Activated T-helper 1 cell treated with anti-CD3 and anti-CD28 coated beads, Interleukin-12 subunit alpha, Interleukin-12 subunit beta, Interleukin-2, Interleukin-4 antibody, amounts not matched to agents 30 ng/mL and 10 ng/mL and 1 ng/mL, durations not matched to agents 14 hours and 24 hours and 36 hours (primary cell): ENCODE measurements at regions of chr12 and their contacts with region 1.

Region 1: GRCh38 chr12:51424662-51425438 is at the start of gene SLC4A8:
- DNase-seq: peak; percentile 75
- H3K4me3 Mint-ChIP-seq: peak within 1 kb of the TSS; percentile 82
- H3K27ac Mint-ChIP-seq: peak within 1 kb of the TSS; percentile 27
- H3K4me1 Mint-ChIP-seq: peaks cover 16% of the 10 kb centered on the region
- H3K27me3 Mint-ChIP-seq: peaks cover 18% of the 10 kb centered on the region
- total RNA-seq, gene SLC4A8: 2.4 and 2.6 TPM in 2 replicates

Region 2: GRCh38 chr12:51482929-51483697 is 58.3 kb after region 1 on chr12:
- intact Hi-C with region 1: loop called (anchors 5 kb)
- DNase-seq: peak; percentile 11
- H3K4me3 Mint-ChIP-seq: peak overlapping the region; percentile 76
- H3K27ac Mint-ChIP-seq: peak overlapping the region; percentile 96
- H3K4me1 Mint-ChIP-seq: peaks cover 47% of the 10 kb centered on the region
- H3K27me3 Mint-ChIP-seq: peaks cover 4% of the 10 kb centered on the region

Region 3: DNA sequence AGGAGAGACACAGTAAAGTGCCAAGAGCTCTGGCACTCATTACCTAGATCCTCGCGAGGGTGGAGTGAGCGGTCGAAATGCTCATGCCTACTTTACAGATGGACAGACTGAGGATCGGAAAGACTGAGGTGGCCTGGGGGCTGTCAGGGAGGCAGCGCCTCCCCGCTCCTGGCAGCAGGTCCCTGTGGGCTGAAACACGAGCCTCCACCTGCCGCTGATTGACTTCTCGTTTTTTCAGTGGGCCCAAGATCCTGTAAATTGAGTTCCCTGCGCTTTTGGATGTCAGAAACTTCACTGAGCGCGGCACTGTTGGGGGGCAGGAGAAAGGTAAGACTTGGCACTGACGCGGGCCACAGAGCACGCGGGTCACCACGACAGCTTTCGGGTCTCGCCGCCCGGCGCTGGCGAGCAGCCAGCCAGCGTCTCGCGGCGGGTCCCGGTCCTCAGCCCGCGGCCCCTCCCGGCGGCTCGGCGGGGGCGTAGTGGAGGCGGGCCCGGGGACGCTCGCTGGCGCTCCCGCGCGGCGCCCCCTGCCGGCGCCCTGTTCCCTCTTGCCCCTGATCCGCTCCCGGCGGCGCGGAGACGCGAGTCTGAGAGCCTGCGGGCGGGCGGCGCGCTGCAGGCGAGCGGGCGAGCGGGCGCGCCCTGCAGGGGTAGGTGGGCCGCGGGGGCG is 165.6 kb after region 1 on chr12:
- intact Hi-C with region 1: loop called (anchors 5 kb)
- DNase-seq: peak; percentile 72
- H3K4me3 Mint-ChIP-seq: peak overlapping the region; percentile 88
- H3K27ac Mint-ChIP-seq: peak overlapping the region; percentile 77
- H3K4me1 Mint-ChIP-seq: peaks cover 10% of the 10 kb centered on the region
- H3K27me3 Mint-ChIP-seq: peaks cover 61% of the 10 kb centered on the region

Region 4: DNA sequence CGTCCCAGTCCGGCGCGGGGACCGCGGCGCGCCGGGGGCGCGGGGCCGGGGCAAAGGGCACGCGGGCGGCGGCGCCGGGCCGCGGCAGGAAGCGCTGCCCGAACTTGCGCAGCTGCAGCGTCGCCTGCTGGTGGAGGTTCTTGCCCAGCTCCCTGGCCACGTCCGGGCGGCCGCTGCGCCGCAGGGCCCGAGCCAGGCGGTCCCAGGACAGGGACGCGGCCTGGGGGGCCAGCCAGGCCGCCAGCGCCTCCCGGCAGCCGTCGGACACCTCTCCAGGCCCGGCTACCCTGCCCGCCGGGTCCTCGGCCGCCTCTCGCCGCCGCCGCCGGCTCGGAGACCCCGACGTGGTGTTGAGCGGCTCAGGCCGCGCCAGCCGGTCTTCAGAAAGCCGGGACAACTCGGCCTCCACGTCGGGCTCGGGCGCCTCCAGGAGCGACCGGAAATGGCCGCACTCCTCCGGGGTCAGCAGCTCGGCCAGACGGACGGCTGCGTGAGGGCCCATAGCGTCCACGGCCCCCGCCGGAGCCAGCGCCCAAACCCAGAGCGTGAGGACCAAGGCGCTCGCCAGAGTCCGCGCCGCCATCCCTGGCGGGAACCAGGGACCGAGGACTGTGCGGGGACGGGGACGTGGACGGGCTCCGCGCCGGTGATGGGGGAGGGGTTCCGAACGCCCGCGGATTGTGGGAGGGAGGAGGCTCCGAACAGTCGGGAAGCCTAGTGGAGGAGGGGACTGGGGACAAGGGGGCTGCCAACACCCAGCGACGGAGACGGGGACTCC is 389.6 kb after region 1 on chr12:
- intact Hi-C with region 1: loop called (anchors 2 kb)
- DNase-seq: peak; percentile 59
- H3K4me3 Mint-ChIP-seq: peak overlapping the region; percentile 51
- H3K27ac Mint-ChIP-seq: no peak overlapping the region
- H3K4me1 Mint-ChIP-seq: peaks cover 6% of the 10 kb centered on the region
- H3K27me3 Mint-ChIP-seq: peaks cover 45% of the 10 kb centered on the region